SK-N-SH (cell line): ENCODE measurements at regions of chr15 and their contacts with region 1.

Region 1: GRCh38 chr15:77543159-77543882 is 89.4 kb downstream of the LINGO1 start:
- DNase-seq: peak; percentile 95
- H3K4me3 ChIP-seq: peak overlapping the region; percentile 42 to 46; a peak in 3 of 4 replicates
- H3K27ac ChIP-seq: peak overlapping the region; percentile 16 to 17; a peak in 1 of 4 replicates
- H3K4me1 ChIP-seq: peaks cover 16 to 25% of the 10 kb centered on the region in 2 experiments; a peak in 3 of 4 replicates
- H3K27me3 ChIP-seq: no peaks in the 10 kb centered on the region
- CTCF ChIP-seq: peak; percentile 97
- EP300 ChIP-seq: no peak
- RAD21 ChIP-seq: peak; percentile 99

Region 2: GRCh38 chr15:77112838-77113504 is 430.4 kb before region 1 on chr15:
- CTCF ChIA-PET with region 1: interaction called, 134 read pairs
- POLR2A ChIA-PET with region 1: no interaction called
- DNase-seq: no peak
- H3K4me3 ChIP-seq: no peak overlapping the region
- H3K27ac ChIP-seq: no peak overlapping the region
- H3K4me1 ChIP-seq: peaks cover 0 to 5% of the 10 kb centered on the region in 2 experiments; a peak in 2 of 4 replicates
- H3K27me3 ChIP-seq: no peaks in the 10 kb centered on the region
- CTCF ChIP-seq: no peak
- EP300 ChIP-seq: no peak
- RAD21 ChIP-seq: no peak

Region 3: GRCh38 chr15:77179541-77179998 is 363.8 kb before region 1 on chr15:
- CTCF ChIA-PET with region 1: interaction called, 101 read pairs
- POLR2A ChIA-PET with region 1: no interaction called
- DNase-seq: no peak
- H3K4me3 ChIP-seq: no peak overlapping the region
- H3K27ac ChIP-seq: no peak overlapping the region
- H3K4me1 ChIP-seq: no peaks in the 10 kb centered on the region
- H3K27me3 ChIP-seq: no peaks in the 10 kb centered on the region
- CTCF ChIP-seq: no peak
- EP300 ChIP-seq: no peak
- RAD21 ChIP-seq: no peak

Region 4: DNA sequence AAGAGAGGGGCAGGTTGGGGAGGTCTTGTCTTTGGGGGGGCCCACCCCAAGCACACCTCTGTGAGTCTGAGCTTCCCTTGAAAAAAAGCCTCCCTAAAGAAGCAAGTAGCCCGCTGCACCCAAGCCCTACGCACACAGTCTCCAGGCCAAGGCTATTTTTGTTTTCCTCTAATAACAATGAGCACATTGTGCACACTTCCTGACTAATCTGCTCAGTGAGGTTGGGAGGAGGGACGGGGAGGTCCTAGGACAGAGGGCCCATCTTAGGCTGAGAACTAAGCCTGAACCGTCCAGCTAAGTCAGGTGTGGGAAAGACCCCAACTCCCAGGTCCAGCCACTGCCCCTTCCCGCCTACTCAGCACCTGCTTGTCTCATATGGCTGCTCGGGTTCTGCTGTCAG is 35.4 kb before region 1 on chr15:
- CTCF ChIA-PET with region 1: interaction called, 80 read pairs
- POLR2A ChIA-PET with region 1: no interaction called
- DNase-seq: no peak
- H3K4me3 ChIP-seq: no peak overlapping the region
- H3K27ac ChIP-seq: peak overlapping the region in 1 of 2 experiments; percentile 15; a peak in 1 of 4 replicates
- H3K4me1 ChIP-seq: peaks cover 16 to 20% of the 10 kb centered on the region in 2 experiments; a peak in 2 of 4 replicates
- H3K27me3 ChIP-seq: no peaks in the 10 kb centered on the region
- CTCF ChIP-seq: no peak
- EP300 ChIP-seq: no peak
- RAD21 ChIP-seq: no peak

Region 5: DNA sequence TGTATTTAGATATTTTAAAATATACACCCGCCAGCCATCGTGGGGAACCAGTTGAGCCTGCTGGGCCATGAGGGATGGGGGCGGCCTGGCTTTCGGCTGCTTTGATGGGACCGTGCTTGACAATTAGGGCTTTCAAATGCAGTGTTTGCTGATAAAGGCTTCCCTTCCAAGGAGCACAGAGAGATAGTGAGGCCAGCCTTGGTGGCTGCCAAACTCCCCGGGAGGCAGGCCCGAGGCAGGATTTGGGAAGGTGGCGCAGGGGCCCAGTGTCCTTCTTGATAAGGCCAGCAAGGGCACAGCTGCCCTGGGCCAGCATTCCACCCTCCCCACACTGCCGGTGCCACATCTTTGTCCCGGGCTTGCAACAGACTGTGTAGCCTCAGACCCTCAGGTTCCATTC is 13.8 kb after region 1 on chr15:
- CTCF ChIA-PET with region 1: interaction called, 17 read pairs
- POLR2A ChIA-PET with region 1: no interaction called
- DNase-seq: no peak
- H3K4me3 ChIP-seq: no peak overlapping the region
- H3K27ac ChIP-seq: no peak overlapping the region
- H3K4me1 ChIP-seq: peaks cover 0 to 11% of the 10 kb centered on the region in 2 experiments; a peak in 1 of 4 replicates
- H3K27me3 ChIP-seq: no peaks in the 10 kb centered on the region
- CTCF ChIP-seq: no peak
- EP300 ChIP-seq: no peak
- RAD21 ChIP-seq: no peak

Region 6: GRCh38 chr15:77607111-77607893 is 64.0 kb after region 1 on chr15:
- CTCF ChIA-PET with region 1: interaction called, 23 read pairs
- POLR2A ChIA-PET with region 1: no interaction called
- DNase-seq: no peak
- H3K4me3 ChIP-seq: no peak overlapping the region
- H3K27ac ChIP-seq: peak overlapping the region in 1 of 2 experiments; percentile 58; a peak in 1 of 4 replicates
- H3K4me1 ChIP-seq: peaks cover 11 to 61% of the 10 kb centered on the region in 2 experiments; a peak in 2 of 4 replicates
- H3K27me3 ChIP-seq: no peaks in the 10 kb centered on the region
- CTCF ChIP-seq: no peak
- EP300 ChIP-seq: no peak
- RAD21 ChIP-seq: no peak